ENCODE measurements at regions of chr10 and their contacts with region 1.

Region 1: DNA sequence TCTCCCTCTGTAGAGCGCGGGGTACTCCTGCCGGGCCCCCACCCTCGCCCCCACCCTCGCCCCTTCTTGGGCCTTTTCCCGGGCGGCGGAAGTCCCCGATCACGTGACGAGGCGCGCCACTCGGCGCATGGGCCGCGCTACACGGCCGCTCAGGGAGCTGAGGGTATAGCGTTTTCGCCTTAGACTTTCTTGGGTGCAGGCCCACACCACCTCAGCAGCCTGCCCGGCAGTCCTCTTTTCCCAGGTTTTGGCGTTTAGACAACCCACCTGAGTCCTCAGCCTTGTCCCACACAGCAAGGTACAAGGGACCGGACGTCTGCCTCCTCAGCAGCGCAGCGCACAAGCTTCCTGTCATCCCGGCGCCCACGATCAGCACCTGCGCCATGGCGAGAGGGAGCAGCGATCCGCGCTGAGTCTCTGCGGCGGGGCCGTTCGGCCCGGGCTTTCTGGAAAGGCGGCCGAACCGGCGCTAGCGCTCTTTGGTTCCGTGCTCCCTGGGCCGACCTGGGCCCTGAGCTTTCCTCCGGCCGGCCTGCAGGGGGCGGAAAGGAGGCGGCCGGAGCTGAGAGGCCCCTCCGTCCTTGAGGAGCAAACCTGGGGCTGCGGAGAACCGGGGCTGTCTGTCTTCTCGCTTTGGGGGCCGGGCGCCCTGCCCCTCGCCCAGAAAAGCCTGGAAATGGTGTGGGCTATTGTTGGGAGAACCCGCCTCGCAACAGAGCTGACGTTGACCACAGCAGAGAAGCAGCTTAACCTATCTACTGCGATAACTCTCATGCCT is at the start of gene RNLS:
- DNase-seq: no peak
- ATAC-seq: peak; percentile 49; the same call in 1 of the 2 replicates
- H3K4me3 ChIP-seq: no peak within 1 kb of the TSS
- H3K27ac ChIP-seq: no peak within 1 kb of the TSS
- H3K4me1 ChIP-seq: no peaks in the 10 kb centered on the region
- H3K27me3 ChIP-seq: no peaks in the 10 kb centered on the region
- CTCF ChIP-seq: peak in 2 of 3 experiments; percentile 41 to 42; a peak in 4 of 6 replicates
- POLR2A ChIP-seq: no peak
- RAD21 ChIP-seq: no peak
- total RNA-seq, gene RNLS: not detected

Region 2: GRCh38 chr10:88004451-88004850 is 578.5 kb before region 1 on chr10:
- CTCF ChIA-PET with region 1: no interaction called
- POLR2A ChIA-PET with region 1: no interaction called
- RAD21 ChIA-PET with region 1: no interaction called
- intact Hi-C with region 1: no loop called
- DNase-seq: no peak
- ATAC-seq: no peak
- H3K4me3 ChIP-seq: no peak overlapping the region
- H3K27ac ChIP-seq: no peak overlapping the region
- H3K4me1 ChIP-seq: peaks cover 0 to 5% of the 10 kb centered on the region in 2 experiments; a peak in 2 of 4 replicates
- H3K27me3 ChIP-seq: no peaks in the 10 kb centered on the region
- CTCF ChIP-seq: no peak
- POLR2A ChIP-seq: no peak
- RAD21 ChIP-seq: no peak

Region 3: GRCh38 chr10:88810196-88810961 is 227.4 kb after region 1 on chr10:
- CTCF ChIA-PET with region 1: no interaction called
- POLR2A ChIA-PET with region 1: no interaction called
- RAD21 ChIA-PET with region 1: no interaction called
- intact Hi-C with region 1: loop called (anchors 5 kb)
- DNase-seq: peak; percentile 60
- ATAC-seq: peak; percentile 98
- H3K4me3 ChIP-seq: no peak overlapping the region
- H3K27ac ChIP-seq: no peak overlapping the region
- H3K4me1 ChIP-seq: no peaks in the 10 kb centered on the region
- H3K27me3 ChIP-seq: no peaks in the 10 kb centered on the region
- CTCF ChIP-seq: peak; percentile 83 to 86 (median 84)
- POLR2A ChIP-seq: no peak
- RAD21 ChIP-seq: peak; percentile 82